GM13977 (cell line): ENCODE measurements at regions of chrX and their contacts with region 1.

Region 1: DNA sequence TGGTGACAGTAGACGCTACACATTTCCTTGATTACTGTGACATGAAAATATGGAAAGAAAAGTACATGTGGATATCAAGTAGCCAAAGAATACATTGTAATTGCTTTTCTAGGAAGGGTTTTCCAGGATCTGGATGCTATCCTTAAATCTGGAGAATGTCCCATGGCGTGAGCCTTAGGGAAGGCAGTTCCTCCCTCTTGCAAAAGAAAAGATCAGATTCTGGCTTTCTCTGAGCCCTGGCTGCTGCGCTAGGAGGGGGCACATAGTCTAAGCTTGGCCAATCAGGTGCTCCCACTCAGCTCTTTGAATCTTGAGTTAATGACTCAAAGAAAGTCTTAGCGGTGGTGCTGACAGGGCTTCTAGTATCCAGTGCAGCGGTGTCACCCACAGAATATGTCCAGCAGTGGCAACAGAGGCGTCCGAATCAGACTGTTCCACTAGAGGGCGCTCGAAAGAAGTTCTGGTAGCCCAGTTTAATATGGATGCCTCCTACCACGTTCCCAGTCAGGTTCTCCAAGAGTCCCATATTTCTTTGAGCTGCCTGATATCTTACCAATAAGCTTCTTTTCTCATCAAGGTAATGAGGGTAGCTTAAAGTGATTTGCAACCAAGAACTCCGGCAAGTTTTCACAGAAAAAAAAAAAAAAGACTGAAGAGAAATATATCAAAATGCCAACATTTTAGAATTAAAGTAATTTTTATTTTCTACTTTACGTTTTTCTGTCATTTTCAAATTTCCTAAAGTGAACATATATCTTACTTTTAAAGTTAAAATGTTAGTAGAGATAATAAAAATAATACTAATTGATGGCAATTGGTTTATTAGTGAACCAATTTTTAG is 213.4 kb upstream of the S100G start:
- DNase-seq: peak; percentile 27
- CTCF ChIP-seq: peak; percentile 73

Region 2: GRCh38 chrX:15471016-15471415 is 965.6 kb before region 1 on chrX:
- in situ Hi-C with region 1: no loop called
- DNase-seq: peak; percentile 46
- CTCF ChIP-seq: peak; percentile 84

Region 3: DNA sequence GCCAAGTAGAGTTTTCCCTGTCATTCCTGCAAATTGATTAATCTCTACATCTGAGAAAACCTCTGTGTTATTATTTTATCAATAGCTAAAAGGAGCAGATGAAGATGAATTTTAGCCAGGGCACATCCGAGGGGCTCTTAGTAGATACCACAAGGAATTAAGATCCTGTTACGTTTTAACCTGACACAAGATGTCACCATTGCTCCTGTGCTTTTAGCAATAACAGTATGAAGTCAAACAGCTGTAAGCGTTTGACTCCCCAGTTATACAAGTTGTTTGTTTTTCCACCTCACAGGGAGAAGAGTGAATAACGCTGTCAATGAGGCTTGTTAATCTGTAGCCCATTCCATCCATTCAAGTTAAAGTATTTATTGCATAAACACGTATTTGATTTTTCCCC is 506.0 kb before region 1 on chrX:
- in situ Hi-C with region 1: loop called (anchors 25 kb)
- DNase-seq: peak; percentile 26
- CTCF ChIP-seq: peak; percentile 36

Region 4: DNA sequence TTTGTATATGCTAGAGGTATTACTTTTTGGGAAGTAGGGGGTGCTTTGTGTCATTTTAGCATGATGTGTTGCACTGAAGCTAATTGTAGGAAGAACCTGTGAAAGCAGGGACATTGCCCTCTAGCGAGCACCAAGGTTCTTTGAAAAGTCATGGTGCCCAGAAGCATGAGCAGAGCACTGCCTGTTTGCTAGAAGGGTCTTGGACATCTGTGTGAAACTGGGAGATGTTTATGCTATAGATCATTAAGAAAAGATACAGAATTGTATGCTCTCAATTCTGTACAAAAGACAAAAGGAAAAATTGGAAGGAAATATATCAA is 298.5 kb before region 1 on chrX:
- in situ Hi-C with region 1: loop called (anchors 25 kb)
- DNase-seq: no peak
- CTCF ChIP-seq: peak; percentile 44

Region 5: DNA sequence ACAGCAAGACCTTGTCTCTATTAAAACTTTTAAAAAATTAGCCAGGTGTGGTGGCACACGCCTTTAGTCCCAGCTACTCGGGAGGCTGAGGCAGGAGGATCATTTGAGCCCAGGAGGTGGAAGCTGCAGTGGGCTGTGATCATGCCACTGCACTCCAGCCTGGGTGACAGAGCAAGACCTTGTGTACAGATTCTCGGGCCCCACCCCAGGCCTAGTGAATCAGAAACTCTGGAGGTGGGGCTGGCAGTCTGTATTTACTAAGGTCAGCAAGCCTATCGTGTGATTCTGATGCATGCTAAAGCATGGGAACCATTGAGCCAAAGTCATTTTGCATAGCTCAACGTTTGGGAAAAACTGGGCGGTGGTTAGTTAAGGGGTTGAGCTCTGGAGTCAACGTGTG is 216.9 kb after region 1 on chrX:
- in situ Hi-C with region 1: no loop called
- DNase-seq: no peak
- CTCF ChIP-seq: no peak

Region 6: GRCh38 chrX:16852617-16853179 is 416.1 kb after region 1 on chrX:
- in situ Hi-C with region 1: no loop called
- DNase-seq: no peak
- CTCF ChIP-seq: no peak

Region 7: DNA sequence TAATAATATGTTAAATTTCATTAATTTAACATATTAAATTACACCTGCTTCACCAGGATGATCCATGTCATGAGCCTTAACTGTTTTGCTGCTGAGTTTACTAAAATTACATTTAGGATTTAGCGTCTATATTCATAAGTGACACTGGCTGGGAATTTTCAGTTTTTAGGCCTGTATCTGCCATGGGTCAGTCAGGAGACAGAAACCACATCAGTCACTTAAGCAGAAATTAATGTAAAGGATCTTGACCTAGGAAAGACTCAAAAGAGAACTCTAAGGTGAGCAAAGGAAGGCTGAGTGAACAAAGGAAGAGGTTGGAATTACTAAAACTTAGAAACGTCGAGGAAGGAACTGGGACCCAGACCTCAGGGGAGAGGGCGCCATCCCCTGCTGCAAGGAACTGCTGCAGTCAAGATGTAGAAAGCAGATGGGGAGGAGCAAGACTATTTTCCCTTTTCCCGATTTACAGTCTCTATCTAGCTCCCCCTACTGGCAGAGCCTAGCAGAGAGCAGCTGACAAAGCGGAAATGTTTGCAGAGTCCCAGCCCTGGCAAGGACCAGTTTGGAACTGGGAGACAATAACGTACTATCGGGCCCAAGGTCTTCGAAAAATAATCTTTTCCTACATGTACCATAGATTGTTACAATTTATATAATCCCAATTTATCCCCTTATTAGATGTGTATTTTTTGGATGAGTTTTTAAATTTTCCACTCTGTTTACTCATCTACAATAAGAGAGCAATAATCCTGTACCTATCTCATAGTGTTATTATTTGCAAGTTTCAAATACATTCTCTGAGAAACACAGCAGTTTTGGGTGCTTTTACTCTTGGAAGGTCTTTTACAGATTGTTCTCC is 456.2 kb after region 1 on chrX:
- in situ Hi-C with region 1: no loop called
- DNase-seq: peak; percentile 60
- CTCF ChIP-seq: peak; percentile 90